ENCODE measurements at regions of chr11 and their contacts with region 1.

Region 1: DNA sequence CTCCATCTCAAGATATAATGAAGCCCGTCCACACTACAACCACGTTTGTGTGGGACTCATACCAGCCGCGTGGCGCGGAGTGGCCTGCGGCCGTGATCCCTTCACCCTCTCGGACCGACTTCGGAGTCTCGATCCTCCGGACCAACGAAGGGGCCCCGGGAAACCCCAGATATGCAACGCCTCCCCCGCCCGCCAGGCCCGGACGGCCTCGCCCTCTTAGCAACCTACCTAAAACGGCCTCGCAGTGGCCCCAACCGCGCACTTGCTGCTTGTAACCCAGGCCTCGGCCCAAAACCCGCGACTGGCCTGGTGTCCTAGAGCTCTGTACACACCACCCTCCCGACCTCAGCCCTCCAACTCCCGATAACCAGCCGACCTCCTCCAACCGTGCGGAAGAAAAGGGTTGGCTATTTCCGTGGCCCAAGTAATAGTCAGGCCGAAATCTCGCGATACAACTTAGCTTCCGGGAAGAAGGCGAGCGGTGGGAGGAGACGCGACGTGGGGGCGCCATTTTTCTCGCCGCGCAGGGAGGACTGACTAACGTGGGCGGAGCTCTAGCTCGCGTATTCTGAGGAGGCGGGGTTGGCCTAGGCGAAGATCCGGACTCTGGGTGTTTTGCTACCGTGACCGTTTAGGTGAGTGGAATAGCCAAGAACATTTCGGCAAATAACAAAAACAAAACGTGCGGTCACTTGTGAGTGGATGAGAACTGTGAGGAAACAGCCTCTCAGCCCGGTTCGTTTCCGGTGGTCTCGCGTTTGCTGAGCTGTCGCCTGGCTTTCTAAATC is at the starts of genes C11orf54 and TAF1D:
- DNase-seq: peak; percentile 99
- H3K4me3 ChIP-seq: peak within 1 kb of the TSS; percentile 83 to 99 (median 94)
- H3K27ac ChIP-seq: peak within 1 kb of the TSS; percentile 92 to 97
- H3K4me1 ChIP-seq: peaks cover 16 to 72% (median 37%) of the 10 kb centered on the region in 4 experiments
- H3K27me3 ChIP-seq: no peaks in the 10 kb centered on the region

Region 2: GRCh38 chr11:93623179-93623578 is 118.1 kb before region 1 on chr11:
- CTCF ChIA-PET with region 1: no interaction called
- POLR2A ChIA-PET with region 1: no interaction called
- DNase-seq: no peak
- H3K4me3 ChIP-seq: no peak overlapping the region
- H3K27ac ChIP-seq: no peak overlapping the region
- H3K4me1 ChIP-seq: peaks cover 0 to 3% (median under 1%) of the 10 kb centered on the region in 4 experiments
- H3K27me3 ChIP-seq: no peaks in the 10 kb centered on the region

Region 3: GRCh38 chr11:93718057-93718563 is 23.2 kb before region 1 on chr11:
- CTCF ChIA-PET with region 1: interaction called, 51 read pairs
- POLR2A ChIA-PET with region 1: interaction called, 47 read pairs
- DNase-seq: peak; percentile 94 to 97 (median 94)
- H3K4me3 ChIP-seq: peak overlapping the region in 2 of 7 experiments; percentile 19 to 51
- H3K27ac ChIP-seq: peak overlapping the region; percentile 89 to 95
- H3K4me1 ChIP-seq: peaks cover 14 to 44% (median 35%) of the 10 kb centered on the region in 4 experiments
- H3K27me3 ChIP-seq: no peaks in the 10 kb centered on the region

Region 4: GRCh38 chr11:93727985-93728791 is 13.1 kb before region 1 on chr11:
- CTCF ChIA-PET with region 1: interaction called, 51 read pairs
- POLR2A ChIA-PET with region 1: interaction called, 5 read pairs
- DNase-seq: no peak
- H3K4me3 ChIP-seq: no peak overlapping the region
- H3K27ac ChIP-seq: no peak overlapping the region
- H3K4me1 ChIP-seq: no peaks in the 10 kb centered on the region
- H3K27me3 ChIP-seq: no peaks in the 10 kb centered on the region

Region 5: GRCh38 chr11:93784152-93784934 is 43.1 kb after region 1 on chr11 and contains the start of gene MED17:
- CTCF ChIA-PET with region 1: interaction called, 9 read pairs
- POLR2A ChIA-PET with region 1: interaction called, 11 read pairs
- DNase-seq: peak; percentile 91 to 93 (median 91)
- H3K4me3 ChIP-seq: peak within 1 kb of the TSS; percentile 68 to 100 (median 99)
- H3K27ac ChIP-seq: peak within 1 kb of the TSS; percentile 94 to 96
- H3K4me1 ChIP-seq: peaks cover 0 to 32% (median 19%) of the 10 kb centered on the region in 4 experiments
- H3K27me3 ChIP-seq: no peaks in the 10 kb centered on the region

Region 6: DNA sequence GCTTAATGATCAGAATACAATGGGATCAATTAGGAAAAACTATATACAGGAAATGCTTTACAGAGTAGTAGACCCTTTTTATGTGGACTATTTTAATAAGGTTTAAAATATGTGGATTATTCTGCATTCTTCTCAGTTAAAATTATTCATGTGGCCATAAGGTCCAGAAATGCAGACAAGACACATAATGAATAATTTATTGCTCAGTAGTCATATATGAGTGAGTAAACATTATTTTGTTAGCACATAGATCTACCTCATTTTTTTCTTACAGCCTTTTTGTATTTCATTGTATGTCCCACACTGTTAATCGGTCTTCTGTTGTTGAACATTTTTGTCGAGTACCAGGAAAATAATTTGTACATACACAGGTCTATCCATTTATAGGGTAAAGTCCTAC is 63.6 kb after region 1 on chr11:
- CTCF ChIA-PET with region 1: no interaction called
- POLR2A ChIA-PET with region 1: no interaction called
- DNase-seq: no peak
- H3K4me3 ChIP-seq: no peak overlapping the region
- H3K27ac ChIP-seq: no peak overlapping the region
- H3K4me1 ChIP-seq: no peaks in the 10 kb centered on the region
- H3K27me3 ChIP-seq: no peaks in the 10 kb centered on the region